K562 (cell line): ENCODE measurements at regions of chrX and their contacts with region 1.

Region 1: DNA sequence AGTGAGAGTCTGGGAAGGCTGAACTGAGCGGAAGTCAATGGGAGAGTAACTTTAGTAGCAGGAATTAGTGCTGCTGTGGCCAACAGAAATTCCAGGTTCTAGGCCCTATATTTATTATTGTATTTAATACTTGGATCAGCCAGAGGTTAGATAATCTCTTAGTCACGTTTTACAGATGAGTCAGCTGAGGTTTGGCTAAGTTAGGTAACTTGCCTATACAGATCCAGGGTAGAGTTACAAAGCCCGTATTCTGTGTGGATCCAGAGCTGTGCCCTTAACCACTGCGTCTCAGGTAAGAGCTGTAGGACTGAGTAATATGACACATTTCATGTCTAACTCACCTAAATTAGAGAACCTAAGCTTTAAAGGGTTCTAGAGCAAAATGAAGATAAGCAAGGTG is 20.5 kb downstream of the PSMD10 start:
- DNase-seq: no peak
- ATAC-seq: no peak
- H3K4me3 ChIP-seq: no peak overlapping the region
- H3K27ac ChIP-seq: no peak overlapping the region
- H3K4me1 ChIP-seq: no peaks in the 10 kb centered on the region
- H3K27me3 ChIP-seq: no peaks in the 10 kb centered on the region
- CTCF ChIP-seq: no peak
- EP300 ChIP-seq: no peak
- POLR2A ChIP-seq: no peak
- RAD21 ChIP-seq: no peak

Region 2: DNA sequence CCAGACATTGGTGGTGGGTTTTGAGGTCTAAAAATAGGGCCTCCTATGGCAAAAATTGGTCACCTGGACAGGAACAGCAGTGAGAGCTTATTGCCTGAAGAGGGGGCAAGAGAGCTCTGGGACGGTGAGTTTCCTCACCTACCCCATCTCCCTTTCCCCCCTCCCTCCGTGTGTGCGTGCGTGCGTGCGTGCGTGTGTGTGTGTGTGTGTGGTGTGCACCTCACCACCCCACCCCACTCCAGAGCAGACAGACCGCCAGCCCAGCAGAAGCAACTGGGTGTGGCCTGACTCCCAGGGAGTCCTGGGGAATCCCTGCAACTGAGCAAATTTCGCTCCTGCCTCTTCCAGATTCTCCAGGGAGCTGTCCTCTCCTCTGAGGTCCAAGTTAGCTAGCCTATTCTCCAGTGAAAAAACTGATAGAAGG is 397.9 kb before region 1 on chrX:
- CTCF ChIA-PET with region 1: no interaction called
- POLR2A ChIA-PET with region 1: no interaction called
- in situ Hi-C with region 1: no loop called
- intact Hi-C with region 1: loop called (anchors 10 kb)
- DNase-seq: peak; percentile 61 to 80 (median 72)
- ATAC-seq: peak; percentile 62
- H3K4me3 ChIP-seq: no peak overlapping the region
- H3K27ac ChIP-seq: no peak overlapping the region
- H3K4me1 ChIP-seq: peaks cover 21 to 34% of the 10 kb centered on the region in 2 experiments; a peak in 4 of 5 replicates
- H3K27me3 ChIP-seq: no peaks in the 10 kb centered on the region
- CTCF ChIP-seq: peak; percentile 76 to 84 (median 76)
- EP300 ChIP-seq: 0 out of 2 replicates have a peak, but pooled peaks have one; percentile 5
- POLR2A ChIP-seq: no peak
- RAD21 ChIP-seq: peak; percentile 59 to 84

Region 3: DNA sequence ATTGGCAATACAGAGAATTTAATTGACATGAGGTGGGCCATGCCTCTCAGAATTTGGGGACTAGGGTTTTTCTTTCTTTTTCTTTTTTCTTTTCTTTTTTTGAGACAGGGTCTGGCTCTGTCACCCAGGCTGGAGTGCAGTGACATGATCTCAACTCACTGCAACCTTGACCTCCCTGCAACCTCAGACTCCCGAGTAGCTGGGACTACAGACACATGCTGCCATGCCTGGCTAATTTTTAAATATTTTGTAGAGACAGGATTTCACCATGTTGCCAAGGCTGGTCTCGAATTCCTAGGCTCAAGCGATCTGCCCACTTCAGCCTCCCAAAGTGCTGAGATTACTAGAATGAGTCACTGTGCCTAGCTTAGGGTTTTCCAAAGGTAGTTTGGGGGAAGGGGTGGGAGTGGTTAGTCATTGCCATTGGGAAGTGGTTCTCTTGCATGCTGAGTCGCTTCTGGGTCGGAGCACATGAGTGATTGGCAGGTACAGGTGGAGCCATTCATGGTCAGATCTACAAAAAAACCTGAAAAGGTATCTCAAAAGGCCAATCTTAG is 190.8 kb before region 1 on chrX:
- CTCF ChIA-PET with region 1: no interaction called
- POLR2A ChIA-PET with region 1: no interaction called
- in situ Hi-C with region 1: no loop called
- intact Hi-C with region 1: loop called (anchors 1 kb)
- DNase-seq: no peak
- ATAC-seq: no peak
- H3K4me3 ChIP-seq: no peak overlapping the region
- H3K27ac ChIP-seq: no peak overlapping the region
- H3K4me1 ChIP-seq: no peaks in the 10 kb centered on the region
- H3K27me3 ChIP-seq: no peaks in the 10 kb centered on the region
- CTCF ChIP-seq: no peak
- EP300 ChIP-seq: no peak
- POLR2A ChIP-seq: no peak
- RAD21 ChIP-seq: no peak

Region 4: GRCh38 chrX:107902721-107903120 is 168.2 kb before region 1 on chrX:
- CTCF ChIA-PET with region 1: no interaction called
- POLR2A ChIA-PET with region 1: no interaction called
- in situ Hi-C with region 1: no loop called
- intact Hi-C with region 1: loop called (anchors 10 kb)
- DNase-seq: no peak
- ATAC-seq: no peak
- H3K4me3 ChIP-seq: no peak overlapping the region
- H3K27ac ChIP-seq: no peak overlapping the region
- H3K4me1 ChIP-seq: no peaks in the 10 kb centered on the region
- H3K27me3 ChIP-seq: no peaks in the 10 kb centered on the region
- CTCF ChIP-seq: no peak
- EP300 ChIP-seq: no peak
- POLR2A ChIP-seq: no peak
- RAD21 ChIP-seq: no peak

Region 5: DNA sequence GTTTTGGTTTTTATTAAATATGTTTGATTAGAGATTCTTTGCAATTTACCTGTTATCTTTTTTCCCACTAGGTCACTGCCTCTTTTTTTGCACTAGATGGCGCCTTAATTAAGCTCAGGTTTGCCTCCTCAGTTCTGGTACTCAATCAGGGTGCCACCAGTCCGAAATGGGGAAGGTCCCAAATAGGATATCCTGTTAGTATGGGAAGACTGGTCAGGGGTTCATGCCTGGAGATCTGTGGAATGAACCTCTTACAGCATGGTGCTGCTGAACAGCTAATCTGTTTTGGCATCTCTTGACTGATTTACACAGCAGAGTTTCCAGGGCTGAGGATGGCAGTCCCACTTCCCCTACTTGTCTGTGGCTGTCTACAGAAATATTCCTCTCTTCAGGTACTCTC is 50.3 kb before region 1 on chrX:
- CTCF ChIA-PET with region 1: interaction called, 18 read pairs
- POLR2A ChIA-PET with region 1: no interaction called
- in situ Hi-C with region 1: no loop called
- intact Hi-C with region 1: loop called (anchors 1 kb)
- DNase-seq: peak; percentile 11 to 21 (median 16)
- ATAC-seq: 0 out of 3 replicates have a peak, but pooled peaks have one; percentile 53
- H3K4me3 ChIP-seq: no peak overlapping the region
- H3K27ac ChIP-seq: no peak overlapping the region
- H3K4me1 ChIP-seq: no peaks in the 10 kb centered on the region
- H3K27me3 ChIP-seq: no peaks in the 10 kb centered on the region
- CTCF ChIP-seq: peak; percentile 51 to 58 (median 56)
- EP300 ChIP-seq: no peak
- POLR2A ChIP-seq: no peak
- RAD21 ChIP-seq: peak; percentile 39 to 71; a peak in 3 of 4 replicates

Region 6: DNA sequence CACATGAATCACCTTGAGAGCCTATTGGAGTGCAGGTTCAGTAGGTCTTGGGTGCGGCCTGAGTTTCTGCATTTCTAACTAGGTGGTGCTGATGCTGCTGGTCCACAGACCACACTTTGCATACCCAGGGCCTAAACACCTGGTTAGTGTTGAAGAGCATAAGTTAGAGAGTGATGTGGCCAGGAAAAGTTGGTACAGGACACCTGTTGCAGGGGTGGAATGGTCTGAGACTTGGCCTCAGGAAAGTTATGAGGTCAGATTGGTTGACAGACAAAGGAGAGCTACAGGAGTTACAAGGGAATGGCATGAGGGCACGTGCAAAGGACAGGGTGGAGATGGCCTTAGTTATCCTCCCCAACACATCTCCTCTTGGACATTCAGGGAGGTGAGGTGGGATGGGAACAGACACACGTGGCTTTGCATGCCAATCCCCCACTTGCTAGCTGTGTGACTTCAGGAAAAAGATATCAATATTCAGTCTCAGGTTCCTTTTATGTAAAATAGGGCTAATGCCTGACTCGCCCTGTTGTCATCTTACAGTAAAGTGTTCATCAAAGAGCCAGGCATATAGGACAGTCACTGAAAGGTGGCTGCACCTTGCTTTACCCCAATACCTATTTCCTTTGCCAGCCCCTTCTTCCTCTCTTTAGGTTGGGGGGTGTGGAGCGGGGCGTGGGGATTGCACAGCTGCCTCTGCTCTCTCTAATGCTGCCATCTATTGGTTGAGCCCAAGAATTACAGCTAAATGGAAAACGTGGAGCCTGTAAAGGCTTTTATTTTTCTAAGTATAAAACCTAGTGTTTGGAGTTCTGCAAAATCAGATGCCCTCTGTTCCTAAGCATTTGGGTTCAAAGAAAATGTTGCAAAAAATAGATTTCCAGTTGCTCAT is 68.2 kb after region 1 on chrX:
- CTCF ChIA-PET with region 1: no interaction called
- POLR2A ChIA-PET with region 1: no interaction called
- in situ Hi-C with region 1: no loop called
- intact Hi-C with region 1: loop called (anchors 5 kb)
- DNase-seq: peak; percentile 24 to 44 (median 26)
- ATAC-seq: peak; percentile 89
- H3K4me3 ChIP-seq: no peak overlapping the region
- H3K27ac ChIP-seq: no peak overlapping the region
- H3K4me1 ChIP-seq: no peaks in the 10 kb centered on the region
- H3K27me3 ChIP-seq: no peaks in the 10 kb centered on the region
- CTCF ChIP-seq: peak; percentile 57 to 69 (median 64)
- EP300 ChIP-seq: no peak
- POLR2A ChIP-seq: no peak
- RAD21 ChIP-seq: peak; percentile 35 to 57